Activated CD4-positive, alpha-beta memory T cell treated with anti-CD3 and anti-CD28 coated beads for 36 hours (primary cell): ENCODE measurements at regions of chr1 and their contacts with region 1.

Region 1: GRCh38 chr1:28971980-28972771 is 57.8 kb downstream of the EPB41 start:
- DNase-seq: peak; percentile 55
- H3K4me3 Mint-ChIP-seq: no peak overlapping the region
- H3K27ac Mint-ChIP-seq: peak overlapping the region; percentile 51
- H3K4me1 Mint-ChIP-seq: peaks cover 57% of the 10 kb centered on the region
- H3K27me3 Mint-ChIP-seq: no peaks in the 10 kb centered on the region

Region 2: DNA sequence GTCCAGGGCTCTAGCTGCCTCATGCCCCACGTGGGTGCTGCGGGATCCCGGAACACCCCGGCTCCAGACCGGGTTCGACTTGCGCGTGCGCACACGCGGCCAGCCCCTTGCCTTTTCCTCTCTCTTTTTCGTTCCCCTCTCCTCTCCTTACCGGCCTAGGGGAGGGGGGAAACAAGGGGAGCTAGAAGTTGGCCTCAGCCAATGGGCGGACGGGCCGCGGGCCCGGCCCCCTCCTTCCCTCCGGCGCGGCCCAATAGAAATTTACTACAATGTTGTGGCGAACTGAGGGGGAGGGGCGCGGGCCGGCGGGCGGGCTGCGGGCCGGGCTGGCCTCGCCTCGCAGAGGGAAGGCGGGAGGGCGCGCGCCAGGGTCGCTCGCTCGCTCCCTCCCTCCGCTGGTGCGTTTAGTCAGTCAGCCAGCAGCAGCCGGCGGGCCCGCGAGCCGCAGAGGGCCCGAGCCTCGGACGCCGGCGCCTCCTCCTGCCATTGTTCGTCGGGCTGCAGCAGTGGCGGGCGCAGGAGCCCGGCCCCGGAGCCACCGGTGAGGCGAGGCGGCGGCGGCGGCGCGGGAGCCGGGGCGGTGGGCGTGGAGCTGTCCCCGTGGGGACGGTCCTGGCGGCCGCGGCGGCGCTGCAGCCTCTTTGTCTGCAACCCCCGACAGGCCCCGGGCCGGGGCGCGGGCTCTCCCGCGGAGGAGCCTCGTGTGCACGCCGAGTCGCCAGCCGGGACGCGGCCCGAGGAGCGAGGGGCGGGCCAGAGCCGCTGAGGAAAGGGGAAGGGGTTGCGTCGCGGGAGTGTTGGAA is 57.7 kb before region 1 on chr1 and contains the start of gene EPB41:
- CTCF ChIA-PET with region 1: no interaction called
- POLR2A ChIA-PET with region 1: no interaction called
- intact Hi-C with region 1: loop called (anchors 1 kb)
- DNase-seq: peak; percentile 93
- H3K4me3 Mint-ChIP-seq: peak within 1 kb of the TSS; percentile 98
- H3K27ac Mint-ChIP-seq: peak within 1 kb of the TSS; percentile 93
- H3K4me1 Mint-ChIP-seq: peaks cover 50% of the 10 kb centered on the region
- H3K27me3 Mint-ChIP-seq: no peaks in the 10 kb centered on the region
- total RNA-seq, gene EPB41: 67.6 to 71.0 TPM

Region 3: DNA sequence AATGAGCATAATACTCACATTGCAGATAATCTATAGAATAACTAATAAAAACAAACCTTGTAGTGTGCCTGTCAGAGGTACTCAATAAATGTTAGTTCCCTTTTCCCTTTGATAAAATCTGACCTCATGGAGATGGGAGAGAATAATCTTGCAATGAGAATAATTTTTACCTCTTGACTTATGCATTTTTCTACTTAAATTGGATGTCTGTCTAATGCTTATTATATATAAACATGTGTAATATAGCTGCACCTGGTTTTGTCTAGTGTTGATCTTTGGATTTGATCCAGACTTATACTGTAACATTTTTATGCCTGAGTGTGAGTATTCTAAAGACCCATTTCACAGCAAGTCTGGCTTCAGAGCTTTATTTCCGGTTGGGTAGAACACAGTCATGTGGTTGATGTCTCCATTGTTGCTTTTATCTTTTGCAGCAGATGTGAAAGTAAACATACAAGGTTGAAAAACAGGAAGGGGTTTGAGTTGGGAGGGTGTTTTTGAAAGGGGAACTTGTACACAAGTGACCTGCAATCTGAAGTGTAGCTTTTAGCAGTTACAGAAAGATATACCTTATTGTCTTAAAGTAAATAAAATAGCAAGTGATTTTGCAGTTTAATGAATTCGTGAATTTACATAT is 45.4 kb before region 1 on chr1:
- CTCF ChIA-PET with region 1: no interaction called
- POLR2A ChIA-PET with region 1: no interaction called
- intact Hi-C with region 1: loop called (anchors 1 kb)
- DNase-seq: peak; percentile 23
- H3K4me3 Mint-ChIP-seq: peak overlapping the region; percentile 57
- H3K27ac Mint-ChIP-seq: peak overlapping the region; percentile 85
- H3K4me1 Mint-ChIP-seq: peaks cover 55% of the 10 kb centered on the region
- H3K27me3 Mint-ChIP-seq: no peaks in the 10 kb centered on the region

Region 4: DNA sequence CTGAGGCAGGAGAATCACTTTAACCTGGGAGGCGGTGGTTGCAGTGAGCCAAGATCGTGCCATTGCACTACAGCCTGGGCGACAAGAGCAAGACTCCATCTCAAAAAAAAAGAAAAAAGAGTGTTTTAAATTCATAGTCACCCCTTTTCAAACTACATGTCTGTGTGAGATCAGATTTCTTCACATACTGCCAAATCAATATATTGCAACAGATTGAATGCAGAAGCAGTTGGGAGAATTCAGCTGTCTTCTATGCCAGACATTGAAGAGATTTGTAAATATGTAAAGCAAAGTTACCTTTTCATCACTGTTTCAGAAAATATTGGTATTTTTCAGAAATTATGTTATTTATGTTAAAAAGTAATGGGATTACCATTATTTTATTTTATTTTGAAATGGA is 50.4 kb after region 1 on chr1:
- CTCF ChIA-PET with region 1: no interaction called
- POLR2A ChIA-PET with region 1: no interaction called
- intact Hi-C with region 1: no loop called
- DNase-seq: no peak
- H3K4me3 Mint-ChIP-seq: no peak overlapping the region
- H3K27ac Mint-ChIP-seq: no peak overlapping the region
- H3K4me1 Mint-ChIP-seq: no peaks in the 10 kb centered on the region
- H3K27me3 Mint-ChIP-seq: no peaks in the 10 kb centered on the region

Region 5: DNA sequence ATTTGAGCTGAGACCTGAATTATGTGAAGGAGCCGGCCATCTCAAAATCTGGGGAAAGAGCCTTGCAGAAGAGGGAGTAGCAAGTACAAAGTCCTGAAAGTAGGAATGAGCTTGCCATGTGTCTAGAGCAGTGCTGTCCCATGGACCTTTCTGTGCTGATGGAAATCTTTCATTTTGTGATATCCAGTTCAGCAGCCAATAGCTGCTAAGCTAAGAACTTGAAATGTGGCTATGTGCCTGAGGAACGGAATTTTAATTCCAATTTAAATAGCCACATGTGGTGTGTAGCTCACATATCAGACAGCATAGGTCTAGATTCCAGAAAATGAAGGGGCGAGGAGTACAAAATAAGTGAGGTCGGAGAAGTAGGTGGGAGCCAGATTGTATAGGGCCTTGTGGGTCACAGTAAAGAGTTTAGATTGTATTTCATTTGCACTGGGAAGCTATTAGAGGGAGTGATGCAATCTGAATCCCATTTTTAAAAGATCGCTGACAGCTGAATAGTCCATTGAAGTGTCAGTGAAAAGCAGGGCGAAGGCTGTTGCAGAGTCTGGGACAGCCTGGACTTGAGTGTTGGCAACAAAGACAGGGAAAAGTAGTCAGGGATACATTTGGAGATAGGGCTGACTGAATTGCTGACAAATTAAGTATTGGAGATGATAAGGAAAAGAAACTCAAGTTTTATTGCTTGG is 71.2 kb after region 1 on chr1:
- CTCF ChIA-PET with region 1: no interaction called
- POLR2A ChIA-PET with region 1: no interaction called
- intact Hi-C with region 1: loop called (anchors 5 kb)
- DNase-seq: no peak
- H3K4me3 Mint-ChIP-seq: no peak overlapping the region
- H3K27ac Mint-ChIP-seq: peak overlapping the region; percentile 49
- H3K4me1 Mint-ChIP-seq: peaks cover 29% of the 10 kb centered on the region
- H3K27me3 Mint-ChIP-seq: no peaks in the 10 kb centered on the region